ENCODE measurements at regions of chr3 and their contacts with region 1.

Region 1: GRCh38 chr3:143885780-143886427 is 37.6 kb upstream of the SLC9A9 start:
- DNase-seq: no peak
- ATAC-seq: peak in 1 of 4 donors; percentile 52
- H3K4me3 ChIP-seq: no peak overlapping the region
- H3K27ac ChIP-seq: no peak overlapping the region
- H3K4me1 ChIP-seq: no peaks in the 10 kb centered on the region
- H3K27me3 ChIP-seq: no peaks in the 10 kb centered on the region
- CTCF ChIP-seq: peak; percentile 46 to 66 (median 56)
- POLR2A ChIP-seq: no peak

Region 2: DNA sequence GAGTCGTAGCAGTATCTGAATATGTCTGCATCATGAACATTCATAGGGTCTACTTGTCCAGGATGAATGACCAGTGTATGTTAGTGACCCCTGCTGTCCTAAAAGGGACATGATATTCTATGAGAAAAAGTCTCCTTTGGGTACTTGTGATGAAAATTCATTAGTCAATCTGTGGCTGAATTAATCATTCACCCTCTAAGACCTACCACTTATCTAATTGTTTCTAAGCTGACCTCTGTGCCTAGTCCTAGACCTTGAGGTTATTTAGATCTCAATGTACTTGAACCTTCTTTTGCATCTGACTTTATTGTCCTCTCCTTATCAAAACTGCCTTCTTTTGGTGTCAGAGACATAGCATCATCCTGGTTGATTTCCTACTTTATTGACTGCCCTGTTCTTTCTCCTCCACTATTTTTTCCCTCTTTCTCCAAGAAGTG is 885.0 kb after region 1 on chr3:
- intact Hi-C with region 1: loop called in 1 of 10 experiments (anchors 10 kb)
- DNase-seq: no peak
- ATAC-seq: peak in 3 of 4 donors; percentile 55 to 59 (median 57)
- H3K4me3 ChIP-seq: no peak overlapping the region
- H3K27ac ChIP-seq: peak overlapping the region in 1 of 12 donors; percentile 2
- H3K4me1 ChIP-seq: peaks cover 0 to 11% (median 0%) of the 10 kb centered on the region in 12 donors
- H3K27me3 ChIP-seq: no peaks in the 10 kb centered on the region
- CTCF ChIP-seq: peak in 7 of 12 donors; percentile 11 to 47 (median 41)
- POLR2A ChIP-seq: no peak